ENCODE measurements at regions of chr17 and their contacts with region 1.

Region 1: DNA sequence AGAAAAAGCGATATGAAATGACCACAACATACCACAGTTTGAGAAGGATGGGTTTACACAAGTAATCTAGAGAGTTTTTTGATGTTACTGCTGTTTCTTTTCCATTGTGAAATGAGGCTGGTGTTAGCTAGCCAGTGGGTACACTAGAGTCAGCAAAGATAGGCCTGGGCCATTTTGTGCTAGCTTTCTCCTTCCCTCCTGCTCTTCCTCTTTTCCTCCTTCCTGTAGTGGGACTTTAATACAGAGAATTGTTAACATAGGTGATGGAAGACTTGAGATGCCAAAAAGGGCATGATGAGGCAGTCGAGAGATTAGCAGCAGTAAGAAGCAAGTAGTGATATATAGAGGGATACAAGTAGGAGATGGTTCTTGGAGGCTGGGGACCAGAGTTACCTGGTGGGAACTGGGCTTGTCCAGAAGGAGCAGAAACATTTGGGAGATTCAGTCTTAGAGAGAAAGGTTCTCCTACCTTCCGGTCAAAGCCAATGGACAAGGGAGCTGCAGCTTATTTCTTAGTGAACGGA is 7.7 kb downstream of the NSRP1 start:
- DNase-seq: no peak
- H3K4me3 ChIP-seq: no peak overlapping the region
- H3K4me1 ChIP-seq: peaks cover 6% of the 10 kb centered on the region
- H3K27me3 ChIP-seq: no peaks in the 10 kb centered on the region

Region 2: GRCh38 chr17:29533976-29534375 is 590.4 kb before region 1 on chr17:
- in situ Hi-C with region 1: no loop called
- DNase-seq: no peak
- H3K4me3 ChIP-seq: no peak overlapping the region
- H3K4me1 ChIP-seq: no peaks in the 10 kb centered on the region
- H3K27me3 ChIP-seq: no peaks in the 10 kb centered on the region

Region 3: GRCh38 chr17:30278032-30278431 is 153.7 kb after region 1 on chr17:
- in situ Hi-C with region 1: loop called (anchors 10 kb)
- DNase-seq: peak in 1 of 2 experiments; percentile 22
- H3K4me3 ChIP-seq: no peak overlapping the region
- H3K4me1 ChIP-seq: no peaks in the 10 kb centered on the region
- H3K27me3 ChIP-seq: no peaks in the 10 kb centered on the region

Measured in HAP-1 (cell line).